AG04450 (cell line): ENCODE measurements at regions of chr2 and their contacts with region 1.

Region 1: GRCh38 chr2:33380001-33380609 is 96.3 kb upstream of the RASGRP3 start:
- DNase-seq: no peak
- H3K4me3 ChIP-seq: no peak overlapping the region
- H3K27ac ChIP-seq: no peak overlapping the region
- H3K27me3 ChIP-seq: no peaks in the 10 kb centered on the region
- CTCF ChIP-seq: peak; percentile 68

Region 2: DNA sequence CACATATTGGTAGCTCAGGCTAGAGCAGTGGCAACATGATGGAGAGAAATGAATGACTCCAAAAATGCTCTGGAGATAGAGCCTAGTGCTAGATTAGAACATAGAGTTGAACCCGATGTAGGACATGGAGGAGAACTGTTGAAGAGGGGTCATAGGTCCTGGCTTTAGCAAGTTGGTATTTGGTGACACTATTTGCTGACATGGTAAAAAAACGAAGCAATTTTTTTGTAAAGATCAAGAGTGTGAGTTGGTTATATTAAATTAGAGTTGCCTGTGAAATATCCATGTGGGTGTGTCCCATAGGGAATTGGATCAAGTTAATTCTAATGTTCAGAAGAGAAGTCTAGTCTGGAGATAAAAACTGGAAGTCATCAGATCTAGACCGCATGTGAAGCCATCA is 46.7 kb before region 1 on chr2:
- CTCF ChIA-PET with region 1: interaction called, 5 read pairs
- POLR2A ChIA-PET with region 1: interaction called, 13 read pairs
- DNase-seq: no peak
- H3K4me3 ChIP-seq: no peak overlapping the region
- H3K27ac ChIP-seq: no peak overlapping the region
- H3K27me3 ChIP-seq: no peaks in the 10 kb centered on the region
- CTCF ChIP-seq: no peak